ENCODE measurements at regions of chr21 and their contacts with region 1.

Region 1: GRCh38 chr21:33069976-33070811 is at the start of gene OLIG1:
- DNase-seq: no peak
- total RNA-seq, gene OLIG1: not detected

Region 2: DNA sequence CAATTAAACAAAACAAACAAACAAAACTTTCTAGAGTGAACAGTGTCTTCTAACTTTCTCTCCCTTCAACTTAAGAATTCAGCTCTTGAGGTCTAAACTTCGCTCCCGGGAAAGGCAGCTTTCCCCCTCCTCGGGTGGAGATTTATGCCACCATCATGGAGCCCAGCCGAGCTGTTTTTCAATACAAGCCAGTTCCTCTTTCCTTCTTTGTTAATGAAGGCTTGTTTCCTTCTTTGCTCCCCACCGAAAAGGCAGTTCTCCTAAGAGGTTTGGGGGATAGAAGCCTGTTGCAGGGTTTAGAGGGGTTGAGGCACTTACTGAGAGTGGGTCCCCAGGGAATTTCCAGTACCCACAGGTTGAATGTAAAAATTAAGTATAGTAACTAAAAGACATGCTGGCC is 26.2 kb after region 1 on chr21:
- intact Hi-C with region 1: loop called in 1 of 2 experiments (anchors 1 kb)
- DNase-seq: no peak